Common myeloid progenitor, CD34-positive (primary cell): ENCODE measurements at regions of chr1 and their contacts with region 1.

Region 1: GRCh38 chr1:206001476-206001888 is 1.7 kb downstream of the RAB7B start:
- DNase-seq: peak; percentile 40 to 71 (median 71)
- H3K4me3 ChIP-seq: peak overlapping the region in 1 of 7 experiments; percentile 60
- H3K27ac ChIP-seq: no peak overlapping the region
- H3K4me1 ChIP-seq: peaks cover 6 to 59% (median 43%) of the 10 kb centered on the region in 4 experiments
- H3K27me3 ChIP-seq: no peaks in the 10 kb centered on the region

Region 2: GRCh38 chr1:205933671-205934618 is 67.5 kb before region 1 on chr1:
- CTCF ChIA-PET with region 1: no interaction called
- POLR2A ChIA-PET with region 1: no interaction called
- DNase-seq: peak in 2 of 3 donors; percentile 13
- H3K4me3 ChIP-seq: no peak overlapping the region
- H3K27ac ChIP-seq: no peak overlapping the region
- H3K4me1 ChIP-seq: peaks cover 0 to 7% (median 2%) of the 10 kb centered on the region in 4 experiments
- H3K27me3 ChIP-seq: peaks cover 0 to 15% (median 3%) of the 10 kb centered on the region in 5 experiments

Region 3: GRCh38 chr1:205961405-205961804 is 40.1 kb before region 1 on chr1:
- CTCF ChIA-PET with region 1: no interaction called
- POLR2A ChIA-PET with region 1: no interaction called
- DNase-seq: peak; percentile 14 to 76 (median 73)
- H3K4me3 ChIP-seq: no peak overlapping the region
- H3K27ac ChIP-seq: no peak overlapping the region
- H3K4me1 ChIP-seq: peaks cover 0 to 21% (median 7%) of the 10 kb centered on the region in 4 experiments
- H3K27me3 ChIP-seq: peaks cover 0 to 2% (median 0%) of the 10 kb centered on the region in 5 experiments

Region 4: GRCh38 chr1:205983925-205984725 is 17.4 kb before region 1 on chr1:
- CTCF ChIA-PET with region 1: interaction called, 95 read pairs
- POLR2A ChIA-PET with region 1: no interaction called
- DNase-seq: peak; percentile 46 to 59 (median 53)
- H3K4me3 ChIP-seq: no peak overlapping the region
- H3K27ac ChIP-seq: no peak overlapping the region
- H3K4me1 ChIP-seq: peaks cover 0 to 14% (median 7%) of the 10 kb centered on the region in 4 experiments
- H3K27me3 ChIP-seq: no peaks in the 10 kb centered on the region

Region 5: DNA sequence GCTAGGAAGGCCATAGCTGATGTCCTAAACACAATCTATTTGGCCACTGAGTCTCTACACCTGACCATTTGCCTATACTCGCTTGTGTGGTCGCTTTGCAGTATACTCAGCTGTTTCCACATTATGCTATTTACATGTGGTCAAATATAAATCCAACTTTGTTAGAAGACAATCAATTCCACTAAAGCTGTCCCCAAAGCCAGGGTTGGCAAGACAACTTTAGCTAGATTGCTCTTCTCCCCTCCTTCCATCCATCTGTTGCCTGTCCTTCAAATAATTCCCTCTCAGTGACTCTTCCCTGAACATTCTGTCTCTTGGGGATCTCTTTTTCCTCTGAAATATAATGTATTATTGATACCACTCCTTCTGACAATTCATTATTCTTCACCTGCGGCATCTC is 85.6 kb after region 1 on chr1:
- CTCF ChIA-PET with region 1: no interaction called
- POLR2A ChIA-PET with region 1: no interaction called
- DNase-seq: no peak
- H3K4me3 ChIP-seq: peak overlapping the region in 1 of 7 experiments; percentile 45
- H3K27ac ChIP-seq: no peak overlapping the region
- H3K4me1 ChIP-seq: peaks cover 6 to 54% (median 32%) of the 10 kb centered on the region in 4 experiments
- H3K27me3 ChIP-seq: no peaks in the 10 kb centered on the region